Endothelial cell of umbilical vein (primary cell): ENCODE measurements at regions of chr12 and their contacts with region 1.

Region 1: DNA sequence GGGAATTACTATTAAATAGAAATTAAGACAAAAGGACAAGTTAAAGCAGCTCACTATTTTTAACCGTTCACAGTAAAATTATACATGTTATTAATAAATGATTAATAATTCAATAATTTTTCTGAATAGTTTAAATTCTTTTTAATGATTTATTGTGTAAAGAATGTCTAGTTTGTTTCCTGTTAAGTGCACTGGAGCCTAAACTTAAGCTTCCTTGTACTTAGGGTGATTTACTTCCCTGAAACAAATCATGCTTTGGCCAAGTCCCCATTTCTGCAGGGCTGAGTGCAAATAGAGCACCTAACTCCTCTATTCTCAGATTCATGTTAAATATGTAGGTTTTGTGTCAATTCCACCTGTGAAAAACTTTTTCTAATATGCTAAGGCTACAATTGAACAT is 188.9 kb upstream of the PDZRN4 start:
- DNase-seq: peak; percentile 47
- H3K4me3 ChIP-seq: no peak overlapping the region
- H3K27ac ChIP-seq: no peak overlapping the region
- H3K4me1 ChIP-seq: peaks cover 3% of the 10 kb centered on the region
- H3K27me3 ChIP-seq: no peaks in the 10 kb centered on the region
- CTCF ChIP-seq: no peak
- POLR2A ChIP-seq: no peak

Region 2: GRCh38 chr12:40632171-40632570 is 367.0 kb before region 1 on chr12:
- CTCF ChIA-PET with region 1: no interaction called
- POLR2A ChIA-PET with region 1: no interaction called
- dilution Hi-C with region 1: no loop called
- intact Hi-C with region 1: no loop called
- DNase-seq: no peak
- H3K4me3 ChIP-seq: no peak overlapping the region
- H3K27ac ChIP-seq: no peak overlapping the region
- H3K4me1 ChIP-seq: no peaks in the 10 kb centered on the region
- H3K27me3 ChIP-seq: no peaks in the 10 kb centered on the region
- CTCF ChIP-seq: no peak
- POLR2A ChIP-seq: no peak

Region 3: DNA sequence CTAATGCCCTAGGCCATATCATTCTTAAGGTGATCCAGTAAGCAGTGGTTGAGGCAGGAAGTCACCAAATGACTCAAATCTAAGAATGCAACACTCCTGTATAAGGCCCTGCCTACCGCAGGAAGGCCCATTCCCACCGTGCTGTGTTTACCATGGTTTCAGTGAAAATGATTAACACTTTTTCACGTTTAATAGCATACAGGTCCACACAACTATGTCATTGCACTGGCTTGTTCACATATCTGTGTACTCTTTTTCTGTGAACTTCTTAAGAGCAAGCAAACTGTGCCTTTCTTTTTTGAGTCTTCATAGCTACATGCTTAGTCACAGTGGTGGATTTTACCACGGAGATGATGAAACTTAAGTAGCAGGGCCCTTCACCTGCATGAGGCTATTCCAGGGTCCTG is 92.1 kb before region 1 on chr12:
- CTCF ChIA-PET with region 1: no interaction called
- POLR2A ChIA-PET with region 1: no interaction called
- dilution Hi-C with region 1: no loop called
- intact Hi-C with region 1: no loop called
- DNase-seq: no peak
- H3K4me3 ChIP-seq: no peak overlapping the region
- H3K27ac ChIP-seq: no peak overlapping the region
- H3K4me1 ChIP-seq: no peaks in the 10 kb centered on the region
- H3K27me3 ChIP-seq: no peaks in the 10 kb centered on the region
- CTCF ChIP-seq: no peak
- POLR2A ChIP-seq: no peak

Region 4: DNA sequence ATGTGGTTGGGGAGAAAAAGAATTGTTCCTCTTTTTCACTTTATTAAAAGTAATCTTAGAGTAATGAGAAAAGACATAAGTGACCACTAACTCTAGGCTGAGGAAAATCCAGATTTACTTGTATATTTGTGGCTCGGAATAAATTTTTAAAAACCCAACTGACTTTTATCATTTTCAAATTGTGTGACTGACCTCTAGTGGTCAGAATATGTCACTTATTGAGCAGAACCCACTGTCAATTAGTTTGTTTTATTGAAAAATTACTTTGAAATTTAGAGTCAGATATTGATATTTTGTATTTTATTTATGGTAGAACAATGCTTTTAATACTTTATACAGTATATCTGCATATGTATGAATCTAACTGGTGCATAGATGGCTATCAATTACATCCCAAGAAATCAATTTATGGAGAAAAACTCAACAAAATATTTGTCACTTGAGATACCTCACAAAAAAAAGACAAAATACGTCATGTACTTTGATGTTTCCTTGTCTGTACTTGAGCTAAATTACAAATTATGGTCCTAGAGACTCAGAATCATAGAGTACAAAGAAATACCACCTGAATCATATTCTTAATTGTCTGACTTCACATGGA is 77.5 kb before region 1 on chr12:
- CTCF ChIA-PET with region 1: no interaction called
- POLR2A ChIA-PET with region 1: no interaction called
- dilution Hi-C with region 1: no loop called
- intact Hi-C with region 1: no loop called
- DNase-seq: peak; percentile 27
- H3K4me3 ChIP-seq: no peak overlapping the region
- H3K27ac ChIP-seq: no peak overlapping the region
- H3K4me1 ChIP-seq: no peaks in the 10 kb centered on the region
- H3K27me3 ChIP-seq: peaks cover 0 to 4% of the 10 kb centered on the region in 2 experiments
- CTCF ChIP-seq: peak in 1 of 2 donors; percentile 34
- POLR2A ChIP-seq: no peak

Region 5: DNA sequence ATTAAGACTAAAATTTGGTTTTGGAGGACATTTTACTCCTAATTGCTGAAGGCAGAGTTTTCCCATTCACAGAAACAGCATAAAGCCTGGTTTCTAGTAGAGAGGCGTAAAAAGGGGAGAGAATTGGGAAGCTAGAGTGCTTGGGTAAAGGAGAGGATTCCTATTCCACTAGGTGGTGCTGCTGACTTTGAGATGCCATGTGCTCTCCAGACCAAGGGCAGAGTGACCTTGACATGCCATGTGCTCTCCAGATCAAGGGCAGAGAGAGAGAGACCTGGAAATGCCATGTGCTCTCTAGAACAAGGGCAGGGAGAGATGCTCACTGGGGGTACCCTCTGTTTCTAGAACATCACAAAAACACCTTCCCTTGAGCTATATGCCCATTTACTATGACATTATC is 12.7 kb after region 1 on chr12:
- CTCF ChIA-PET with region 1: interaction called, 3 read pairs
- POLR2A ChIA-PET with region 1: no interaction called
- dilution Hi-C with region 1: no loop called
- intact Hi-C with region 1: loop called (anchors 1 kb)
- DNase-seq: peak; percentile 19
- H3K4me3 ChIP-seq: no peak overlapping the region
- H3K27ac ChIP-seq: no peak overlapping the region
- H3K4me1 ChIP-seq: peaks cover 22% of the 10 kb centered on the region
- H3K27me3 ChIP-seq: no peaks in the 10 kb centered on the region
- CTCF ChIP-seq: peak in 1 of 2 donors; percentile 26
- POLR2A ChIP-seq: no peak